ENCODE measurements at regions of chr16 and their contacts with region 1.

Region 1: DNA sequence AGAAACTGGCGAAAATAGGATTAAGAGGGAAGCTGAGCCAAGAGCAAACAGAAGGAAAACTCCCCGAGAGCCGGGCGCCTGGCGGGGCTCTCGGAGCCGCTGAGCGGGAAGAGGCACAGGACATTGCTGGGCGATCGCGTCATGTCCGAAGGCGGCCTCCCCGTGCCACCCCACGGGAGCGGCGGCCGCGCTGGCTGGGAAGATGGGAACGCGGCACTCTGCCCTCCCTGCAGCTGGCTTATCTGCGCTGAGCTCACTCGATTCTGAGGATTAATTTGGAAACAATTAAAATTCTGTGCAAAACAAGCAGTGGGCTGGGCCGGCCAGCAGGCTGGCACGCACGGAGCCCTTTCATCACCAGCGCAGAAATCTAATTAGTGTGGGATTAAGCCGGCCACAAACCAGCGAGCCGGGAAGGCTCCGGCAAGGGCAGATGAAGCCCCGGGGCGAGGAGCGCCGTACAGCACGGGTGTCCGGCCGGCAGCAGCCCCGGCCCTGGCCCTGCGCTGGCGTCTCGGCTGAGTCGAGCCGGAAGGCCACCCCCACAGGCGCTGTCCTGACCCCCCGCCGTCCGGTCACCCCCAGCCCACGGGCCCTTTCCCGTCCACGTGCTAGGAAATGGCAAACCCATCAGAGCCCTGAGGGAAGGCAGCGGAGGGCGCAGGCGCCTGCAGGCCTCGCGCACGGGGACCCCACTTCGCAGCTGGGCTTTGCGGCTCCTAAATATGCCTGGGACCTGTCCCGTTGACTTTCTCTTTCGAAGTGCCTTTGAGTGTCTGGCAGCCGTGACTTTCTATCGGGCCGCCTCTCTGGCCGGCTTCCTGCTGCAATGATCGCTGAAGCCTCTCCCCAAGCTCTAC is 37.9 kb downstream of the SOX8 start:
- DNase-seq: peak; percentile 78 to 92
- ATAC-seq: peak; percentile 78
- H3K4me3 ChIP-seq: no peak overlapping the region
- H3K27ac ChIP-seq: peak overlapping the region in 1 of 2 donors; percentile 53
- H3K4me1 ChIP-seq: no peaks in the 10 kb centered on the region
- H3K27me3 ChIP-seq: no peaks in the 10 kb centered on the region

Region 2: GRCh38 chr16:931626-932500 is 87.6 kb before region 1 on chr16:
- intact Hi-C with region 1: no loop called
- DNase-seq: no peak
- ATAC-seq: peak; percentile 11
- H3K4me3 ChIP-seq: no peak overlapping the region
- H3K27ac ChIP-seq: no peak overlapping the region
- H3K4me1 ChIP-seq: no peaks in the 10 kb centered on the region
- H3K27me3 ChIP-seq: no peaks in the 10 kb centered on the region

Region 3: GRCh38 chr16:970766-971581 is 48.5 kb before region 1 on chr16 and contains the start of gene LMF1:
- intact Hi-C with region 1: loop called in 1 of 2 experiments (anchors 5 kb)
- DNase-seq: peak; percentile 95 to 99
- ATAC-seq: peak; percentile 98
- H3K4me3 ChIP-seq: peak within 1 kb of the TSS; percentile 69 to 70
- H3K27ac ChIP-seq: peak within 1 kb of the TSS in 1 of 2 donors; percentile 37
- H3K4me1 ChIP-seq: no peaks in the 10 kb centered on the region
- H3K27me3 ChIP-seq: no peaks in the 10 kb centered on the region
- total RNA-seq, gene LMF1: 18.2 to 38.4 TPM